Sigmoid colon (tissue), 7 donors: ENCODE measurements at regions of chr7 and their contacts with region 1.

Region 1: GRCh38 chr7:150340024-150340749 is 1.2 kb downstream of the RARRES2 start:
- DNase-seq: peak; percentile 79
- H3K4me3 ChIP-seq: peak overlapping the region; percentile 70 to 76 (median 72)
- H3K27ac ChIP-seq: peak overlapping the region; percentile 85 to 93 (median 91)
- H3K4me1 ChIP-seq: peaks cover 0 to 68% (median 59%) of the 10 kb centered on the region in 4 donors
- H3K27me3 ChIP-seq: no peaks in the 10 kb centered on the region
- CTCF ChIP-seq: no peak
- EP300 ChIP-seq: no peak
- POLR2A ChIP-seq: no peak

Region 2: GRCh38 chr7:150322833-150323681 is 17.1 kb before region 1 on chr7 and contains the starts of genes ACTR3C and LRRC61:
- intact Hi-C with region 1: loop called (anchors 2 kb)
- DNase-seq: no peak
- H3K4me3 ChIP-seq: peak within 1 kb of the TSS; percentile 56 to 89 (median 66)
- H3K27ac ChIP-seq: peak within 1 kb of the TSS; percentile 81 to 91 (median 84)
- H3K4me1 ChIP-seq: peaks cover 0 to 29% (median 23%) of the 10 kb centered on the region in 4 donors
- H3K27me3 ChIP-seq: no peaks in the 10 kb centered on the region
- CTCF ChIP-seq: peak in 1 of 4 experiments; percentile 17
- EP300 ChIP-seq: no peak
- POLR2A ChIP-seq: no peak
- total RNA-seq, gene ACTR3C: 2.9 to 13.3 (median 8.3) TPM
- total RNA-seq, gene LRRC61: 10.3 to 14.0 (median 11.0) TPM

Region 3: GRCh38 chr7:150368096-150368883 is 28.1 kb after region 1 on chr7 and contains the start of gene REPIN1:
- intact Hi-C with region 1: loop called (anchors 2 kb)
- DNase-seq: peak; percentile 97
- H3K4me3 ChIP-seq: peak within 1 kb of the TSS; percentile 69 to 92 (median 75)
- H3K27ac ChIP-seq: peak within 1 kb of the TSS; percentile 92 to 97 (median 95)
- H3K4me1 ChIP-seq: peaks cover 0 to 41% (median 34%) of the 10 kb centered on the region in 4 donors
- H3K27me3 ChIP-seq: no peaks in the 10 kb centered on the region
- CTCF ChIP-seq: no peak
- EP300 ChIP-seq: peak in 2 of 4 donors; percentile 11 to 57
- POLR2A ChIP-seq: peak in 1 of 2 donors; percentile 29
- total RNA-seq, gene REPIN1: 56.3 to 63.7 (median 57.0) TPM

Region 4: GRCh38 chr7:150378853-150379440 is 38.8 kb after region 1 on chr7 and contains the start of gene ZNF775:
- intact Hi-C with region 1: loop called (anchors 2 kb)
- DNase-seq: peak; percentile 98
- H3K4me3 ChIP-seq: peak within 1 kb of the TSS; percentile 84 to 98 (median 92)
- H3K27ac ChIP-seq: peak within 1 kb of the TSS; percentile 91 to 95 (median 94)
- H3K4me1 ChIP-seq: peaks cover 0 to 53% (median 36%) of the 10 kb centered on the region in 4 donors
- H3K27me3 ChIP-seq: no peaks in the 10 kb centered on the region
- CTCF ChIP-seq: no peak
- EP300 ChIP-seq: peak in 1 of 4 donors; percentile 29
- POLR2A ChIP-seq: peak; percentile 22 to 30
- total RNA-seq, gene ZNF775: 6.1 to 10.7 (median 6.9) TPM